Heart left ventricle (tissue), 16 donors: ENCODE measurements at regions of chr9 and their contacts with region 1.

Region 1: DNA sequence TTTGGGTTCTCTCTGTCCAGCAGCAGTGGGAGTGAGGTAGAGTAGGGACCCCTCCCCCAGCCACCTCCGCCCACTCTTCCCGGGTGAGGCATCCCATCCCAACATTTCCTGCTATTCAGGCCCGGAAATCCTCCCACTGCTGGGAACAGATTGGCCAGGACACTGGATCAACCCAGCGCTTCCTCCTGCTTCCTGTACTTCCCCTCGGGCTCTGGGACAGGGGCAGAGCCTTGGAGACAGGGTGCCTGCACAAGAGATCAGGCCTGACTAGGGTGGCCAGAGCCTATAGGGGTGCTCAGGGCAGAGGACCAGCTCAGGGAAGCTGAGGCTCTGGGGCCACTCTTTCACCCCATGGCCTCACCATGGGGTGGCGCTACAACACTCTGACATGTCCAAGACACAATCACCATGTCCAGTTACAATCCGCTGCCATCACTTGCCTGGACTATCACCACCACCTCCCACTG is 14.5 kb downstream of the SH2D3C start:
- DNase-seq: peak; percentile 73 to 85 (median 81)
- ATAC-seq: peak; percentile 66 to 83 (median 76)
- H3K4me3 ChIP-seq: no peak overlapping the region
- H3K27ac ChIP-seq: peak overlapping the region; percentile 45 to 96 (median 88)
- H3K4me1 ChIP-seq: peaks cover 9 to 97% (median 55%) of the 10 kb centered on the region in 12 donors
- H3K27me3 ChIP-seq: peaks cover 0 to 2% (median 0%) of the 10 kb centered on the region in 9 donors
- CTCF ChIP-seq: peak in 11 of 12 donors; percentile 37 to 63 (median 48)
- POLR2A ChIP-seq: peak in 1 of 2 donors; percentile 23

Region 2: DNA sequence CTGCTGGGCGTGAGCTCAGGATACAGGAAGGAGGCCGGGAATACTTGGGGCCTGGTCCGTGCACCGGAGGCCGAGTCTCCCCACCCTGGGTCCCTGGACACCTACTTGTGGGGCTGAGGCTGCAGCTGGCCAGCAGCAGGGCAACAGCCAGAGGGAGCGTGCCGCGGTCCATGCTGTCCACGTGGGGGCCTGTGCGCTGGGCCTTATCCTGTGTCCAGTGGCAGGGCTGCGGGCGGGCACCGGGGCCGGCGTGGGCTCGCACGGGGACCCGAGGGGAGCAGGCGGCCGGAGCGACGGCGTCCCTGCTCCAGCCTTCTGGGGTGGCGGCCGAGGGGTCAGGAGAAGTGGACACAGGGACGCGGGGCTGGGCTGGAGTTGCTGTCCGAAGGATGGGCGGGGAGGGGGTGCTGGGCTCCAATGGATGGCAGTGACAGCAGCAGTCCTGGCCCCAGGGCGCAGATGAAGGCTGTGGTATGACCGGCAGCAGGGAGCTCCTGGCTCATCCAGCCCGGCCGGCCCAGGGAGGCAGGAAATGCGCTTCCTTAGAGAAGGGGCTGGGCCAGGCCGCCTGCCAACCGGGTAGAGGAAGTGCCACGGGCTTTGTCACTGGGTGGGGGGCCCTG is 90.3 kb after region 1 on chr9 and contains the start of gene ENG:
- intact Hi-C with region 1: loop called in 2 of 10 experiments (anchors 5 to 10 kb)
- DNase-seq: peak; percentile 91 to 94 (median 92)
- ATAC-seq: peak; percentile 54 to 83 (median 73)
- H3K4me3 ChIP-seq: peak within 1 kb of the TSS; percentile 49 to 94 (median 88)
- H3K27ac ChIP-seq: peak within 1 kb of the TSS; percentile 85 to 98 (median 95)
- H3K4me1 ChIP-seq: peaks cover 14 to 76% (median 51%) of the 10 kb centered on the region in 12 donors
- H3K27me3 ChIP-seq: no peaks in the 10 kb centered on the region
- CTCF ChIP-seq: no peak
- POLR2A ChIP-seq: peak in 1 of 2 donors; percentile 75
- total RNA-seq, gene ENG: 116 to 252 (median 133) TPM